Head of caudate nucleus (tissue), 42 donors: ENCODE measurements at regions of chr1 and their contacts with region 1.

Region 1: GRCh38 chr1:223081181-223081994 is 61.7 kb downstream of the TLR5 start:
- DNase-seq: peak; percentile 32 to 89 (median 72)

Region 2: GRCh38 chr1:222792744-222793143 is 288.6 kb before region 1 on chr1:
- intact Hi-C with region 1: loop called (anchors 5 kb)
- DNase-seq: peak in 6 of 42 donors; percentile 13 to 50 (median 22)

Region 3: DNA sequence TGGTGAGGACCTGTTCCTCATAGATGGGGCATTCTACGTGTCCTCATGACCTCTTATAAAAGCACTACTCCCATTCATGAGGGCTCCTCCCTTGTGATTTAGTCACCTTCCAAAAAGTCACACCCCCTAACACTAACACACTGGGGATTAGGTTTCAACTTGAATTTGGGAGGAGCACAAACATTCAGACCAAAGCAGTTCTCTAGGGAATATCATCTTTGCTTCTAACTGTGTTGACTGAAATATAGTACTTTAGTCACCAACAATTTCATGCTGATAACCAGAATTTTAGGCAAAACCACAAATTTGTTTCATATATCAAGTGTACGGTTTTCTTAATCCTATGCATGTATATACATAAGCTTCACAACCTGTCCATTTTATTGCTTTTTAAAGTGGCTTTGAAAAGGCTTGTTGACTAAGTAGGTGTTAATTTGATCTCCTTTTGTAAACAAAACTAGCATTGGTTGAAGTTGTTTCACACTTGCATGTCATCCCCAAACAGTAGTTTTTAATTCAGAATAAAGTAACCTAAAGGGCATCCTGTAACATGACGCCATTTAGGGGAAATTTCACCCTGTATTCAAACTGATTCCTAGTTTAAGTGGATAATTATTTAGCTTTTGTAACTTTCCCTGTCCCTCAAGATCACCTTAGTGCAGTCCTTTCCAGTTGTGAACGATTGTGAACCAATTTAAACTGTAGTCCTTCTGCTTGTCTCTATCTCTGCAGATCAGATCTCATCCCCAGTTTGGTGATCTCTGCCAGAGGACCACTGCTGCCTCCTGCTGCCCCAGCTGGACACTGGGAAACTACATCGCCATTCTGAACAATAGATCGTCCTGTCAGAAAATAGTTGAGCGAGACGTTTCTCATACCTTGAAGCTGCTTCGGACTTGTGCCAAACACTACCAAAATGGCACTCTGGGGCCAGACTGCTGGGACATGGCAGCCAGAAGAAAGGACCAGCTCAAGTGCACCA is 79.4 kb before region 1 on chr1:
- intact Hi-C with region 1: no loop called
- DNase-seq: no peak